ENCODE measurements at regions of chr17 and their contacts with region 1.

Region 1: GRCh38 chr17:50560185-50560824 is at the start of gene CACNA1G:
- DNase-seq: peak; percentile 92
- ATAC-seq: peak; percentile 88
- H3K4me3 ChIP-seq: peak within 1 kb of the TSS; percentile 54
- H3K27ac ChIP-seq: no peak within 1 kb of the TSS
- H3K4me1 ChIP-seq: peaks cover 30% of the 10 kb centered on the region
- H3K27me3 ChIP-seq: peaks cover 60% of the 10 kb centered on the region
- CTCF ChIP-seq: no peak
- total RNA-seq, gene CACNA1G: not detected

Region 2: GRCh38 chr17:50620858-50621257 is 60.6 kb after region 1 on chr17:
- intact Hi-C with region 1: loop called (anchors 5 kb)
- DNase-seq: no peak
- ATAC-seq: no peak
- H3K4me3 ChIP-seq: no peak overlapping the region
- H3K27ac ChIP-seq: no peak overlapping the region
- H3K4me1 ChIP-seq: peaks cover 5% of the 10 kb centered on the region
- H3K27me3 ChIP-seq: no peaks in the 10 kb centered on the region
- CTCF ChIP-seq: no peak

Region 3: DNA sequence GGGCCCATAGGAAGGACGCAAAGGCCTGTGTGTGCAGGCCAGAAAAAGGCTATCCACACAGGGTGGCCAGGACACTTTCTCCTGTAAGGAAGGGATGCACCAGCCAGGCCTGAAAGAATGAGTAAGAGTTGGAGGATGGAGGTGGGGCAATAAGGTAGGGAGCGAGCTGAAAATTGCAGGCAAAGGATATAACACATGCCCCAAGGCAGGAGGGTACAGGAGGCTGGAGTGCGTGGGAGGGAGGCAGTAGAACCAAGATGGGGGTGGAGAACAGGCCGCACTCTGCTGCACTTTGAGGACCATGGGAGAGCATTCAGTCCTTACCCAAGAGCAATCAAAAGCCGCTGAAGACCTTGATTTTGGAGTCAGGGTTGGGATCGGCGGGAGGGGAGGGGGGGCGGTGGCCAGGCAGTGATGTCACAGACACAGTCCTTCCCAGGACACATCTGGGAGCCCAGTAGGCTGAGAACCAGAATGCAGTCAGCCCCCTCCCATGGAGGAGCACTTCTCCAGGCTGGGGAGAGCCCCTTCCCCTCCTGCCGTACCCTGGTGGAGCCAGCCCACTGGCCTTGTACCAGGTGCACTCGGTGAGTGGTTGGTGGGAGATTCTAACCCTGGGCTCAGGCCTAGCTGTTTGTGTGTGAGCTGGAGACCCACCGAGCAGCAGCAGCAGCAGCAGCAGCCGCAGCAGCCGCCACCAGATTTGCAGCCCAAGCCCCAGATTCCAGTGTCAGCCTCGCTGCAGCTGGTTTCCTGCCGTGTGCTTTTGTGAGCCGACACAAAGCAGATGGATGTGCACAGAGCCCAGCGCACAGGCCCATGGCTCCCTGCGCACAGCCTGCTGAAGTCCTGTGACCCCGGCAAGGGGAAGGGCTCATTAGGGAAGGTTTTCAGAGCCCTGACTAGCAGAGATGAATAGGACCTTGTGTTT is 129.9 kb after region 1 on chr17:
- intact Hi-C with region 1: loop called (anchors 5 kb)
- DNase-seq: peak; percentile 55
- ATAC-seq: no peak
- H3K4me3 ChIP-seq: no peak overlapping the region
- H3K27ac ChIP-seq: no peak overlapping the region
- H3K4me1 ChIP-seq: peaks cover 40% of the 10 kb centered on the region
- H3K27me3 ChIP-seq: no peaks in the 10 kb centered on the region
- CTCF ChIP-seq: no peak

Measured in upper lobe of right lung (tissue), 1 donor.